ENCODE measurements at regions of chr6 and their contacts with region 1.

Region 1: DNA sequence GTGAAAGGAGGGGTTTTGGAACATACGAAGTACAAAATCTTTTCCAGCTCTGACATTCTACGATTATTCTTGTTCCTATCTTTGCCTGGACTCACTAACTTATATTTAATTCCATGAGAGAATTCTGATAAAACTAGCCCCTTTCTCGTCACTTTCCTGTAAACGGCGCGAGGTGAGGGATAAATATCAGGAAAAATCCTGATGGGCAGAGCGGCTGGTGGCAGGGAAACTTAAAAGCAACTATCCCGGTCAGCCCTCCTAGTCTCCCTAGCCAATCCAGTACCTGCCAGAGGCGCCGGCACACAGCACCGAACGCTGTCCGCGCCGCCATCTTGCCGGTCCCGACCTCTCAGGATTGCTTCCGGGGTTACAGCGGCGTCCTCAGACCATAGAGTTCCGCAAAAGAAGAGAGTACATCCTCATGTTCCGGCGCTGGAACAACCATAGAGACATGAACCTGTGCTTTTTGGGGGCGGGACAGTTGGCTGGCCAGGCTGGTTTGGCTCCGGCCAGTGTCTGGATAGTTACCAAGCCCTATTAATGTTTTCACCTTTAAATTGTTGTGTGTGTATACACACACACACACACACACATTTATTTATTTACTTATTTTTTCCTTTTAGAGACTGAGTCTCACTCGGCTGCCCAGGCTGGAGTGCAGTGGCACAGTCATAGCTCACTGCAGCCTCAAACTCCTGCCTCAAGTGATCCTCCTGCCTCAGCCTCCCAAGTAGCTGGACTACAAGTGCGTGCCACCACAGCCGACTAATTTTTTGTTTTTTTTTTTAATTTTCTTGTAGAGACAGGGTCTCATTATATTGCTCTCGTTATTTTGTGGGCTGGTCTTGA is at the start of gene MRPS10:
- DNase-seq: peak; percentile 95
- ATAC-seq: peak; percentile 99
- H3K4me3 Mint-ChIP-seq: peak within 1 kb of the TSS; percentile 100
- H3K27ac Mint-ChIP-seq: peak within 1 kb of the TSS; percentile 100
- H3K4me1 Mint-ChIP-seq: peaks cover 14% of the 10 kb centered on the region
- H3K27me3 Mint-ChIP-seq: no peaks in the 10 kb centered on the region
- CTCF ChIP-seq: no peak
- total RNA-seq, gene MRPS10: 30.7 to 32.9 TPM (median 31.3 TPM) in 3 replicates

Region 2: GRCh38 chr6:42095785-42096541 is 121.8 kb before region 1 on chr6:
- CTCF ChIA-PET with region 1: interaction called, 28 read pairs
- POLR2A ChIA-PET with region 1: no interaction called
- DNase-seq: peak; percentile 42
- ATAC-seq: peak; percentile 24
- H3K4me3 Mint-ChIP-seq: no peak overlapping the region
- H3K27ac Mint-ChIP-seq: no peak overlapping the region
- H3K4me1 Mint-ChIP-seq: peaks cover 33% of the 10 kb centered on the region
- H3K27me3 Mint-ChIP-seq: peaks cover 82% of the 10 kb centered on the region
- CTCF ChIP-seq: no peak

Region 3: GRCh38 chr6:42175860-42176259 is 41.9 kb before region 1 on chr6:
- CTCF ChIA-PET with region 1: interaction called, 20 read pairs
- POLR2A ChIA-PET with region 1: no interaction called
- DNase-seq: peak; percentile 42
- ATAC-seq: peak; percentile 6; the same call in 1 of the 2 replicates
- H3K4me3 Mint-ChIP-seq: no peak overlapping the region
- H3K27ac Mint-ChIP-seq: peak overlapping the region; percentile 8; the same call in 1 of the 2 replicates
- H3K4me1 Mint-ChIP-seq: peaks cover 44% of the 10 kb centered on the region
- H3K27me3 Mint-ChIP-seq: peaks cover 5% of the 10 kb centered on the region
- CTCF ChIP-seq: 0 out of 2 replicates have a peak, but pooled peaks have one; percentile 16

Region 4: DNA sequence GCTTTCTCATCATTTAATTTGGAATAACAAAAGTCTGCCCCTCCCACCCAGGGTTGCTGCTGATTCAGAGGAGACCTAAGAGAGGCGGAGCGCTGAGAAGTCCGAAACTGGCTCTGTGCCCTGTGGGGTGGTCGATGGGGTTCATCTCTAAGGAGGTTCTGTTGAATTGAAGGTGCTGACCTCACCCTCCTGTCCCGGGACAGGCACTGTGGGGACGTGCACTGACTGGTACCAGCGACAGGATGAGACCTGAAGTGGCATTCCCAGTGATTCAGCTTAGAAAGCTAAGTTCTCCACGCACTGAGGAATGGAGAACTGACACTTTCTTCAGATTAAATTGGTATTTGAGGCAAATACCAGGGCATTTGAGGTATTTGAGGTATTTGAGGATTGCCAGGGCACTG is 24.2 kb before region 1 on chr6:
- CTCF ChIA-PET with region 1: interaction called, 11 read pairs
- POLR2A ChIA-PET with region 1: no interaction called
- DNase-seq: no peak
- ATAC-seq: peak; percentile 85
- H3K4me3 Mint-ChIP-seq: peak overlapping the region; percentile 20
- H3K27ac Mint-ChIP-seq: no peak overlapping the region
- H3K4me1 Mint-ChIP-seq: peaks cover 14% of the 10 kb centered on the region
- H3K27me3 Mint-ChIP-seq: peaks cover 7% of the 10 kb centered on the region
- CTCF ChIP-seq: no peak

Region 5: GRCh38 chr6:42251911-42252637 is 34.3 kb after region 1 on chr6:
- CTCF ChIA-PET with region 1: no interaction called
- POLR2A ChIA-PET with region 1: no interaction called
- DNase-seq: no peak
- ATAC-seq: no peak
- H3K4me3 Mint-ChIP-seq: no peak overlapping the region
- H3K27ac Mint-ChIP-seq: no peak overlapping the region
- H3K4me1 Mint-ChIP-seq: peaks cover 11% of the 10 kb centered on the region
- H3K27me3 Mint-ChIP-seq: no peaks in the 10 kb centered on the region
- CTCF ChIP-seq: no peak

Region 6: GRCh38 chr6:42279144-42279781 is 61.5 kb after region 1 on chr6:
- CTCF ChIA-PET with region 1: no interaction called
- POLR2A ChIA-PET with region 1: no interaction called
- DNase-seq: no peak
- ATAC-seq: no peak
- H3K4me3 Mint-ChIP-seq: no peak overlapping the region
- H3K27ac Mint-ChIP-seq: no peak overlapping the region
- H3K4me1 Mint-ChIP-seq: peaks cover 41% of the 10 kb centered on the region
- H3K27me3 Mint-ChIP-seq: no peaks in the 10 kb centered on the region
- CTCF ChIP-seq: no peak

Region 7: GRCh38 chr6:42555477-42556457 is 338.0 kb after region 1 on chr6:
- CTCF ChIA-PET with region 1: interaction called, 10 read pairs
- POLR2A ChIA-PET with region 1: no interaction called
- DNase-seq: no peak
- ATAC-seq: peak; percentile 83
- H3K4me3 Mint-ChIP-seq: no peak overlapping the region
- H3K27ac Mint-ChIP-seq: no peak overlapping the region
- H3K4me1 Mint-ChIP-seq: no peaks in the 10 kb centered on the region
- H3K27me3 Mint-ChIP-seq: peaks cover 24% of the 10 kb centered on the region
- CTCF ChIP-seq: no peak

Measured in WTC11 (cell line).